Activated naive CD4-positive, alpha-beta T cell treated with anti-CD3 and anti-CD28 coated beads for 36 hours (primary cell): ENCODE measurements at regions of chr10 and their contacts with region 1.

Region 1: GRCh38 chr10:11713186-11713743 is 28.9 kb upstream of the ECHDC3 start:
- DNase-seq: no peak
- H3K4me3 Mint-ChIP-seq: no peak overlapping the region
- H3K27ac Mint-ChIP-seq: no peak overlapping the region
- H3K4me1 Mint-ChIP-seq: peaks cover 17% of the 10 kb centered on the region
- H3K27me3 Mint-ChIP-seq: peaks cover 32% of the 10 kb centered on the region

Region 2: DNA sequence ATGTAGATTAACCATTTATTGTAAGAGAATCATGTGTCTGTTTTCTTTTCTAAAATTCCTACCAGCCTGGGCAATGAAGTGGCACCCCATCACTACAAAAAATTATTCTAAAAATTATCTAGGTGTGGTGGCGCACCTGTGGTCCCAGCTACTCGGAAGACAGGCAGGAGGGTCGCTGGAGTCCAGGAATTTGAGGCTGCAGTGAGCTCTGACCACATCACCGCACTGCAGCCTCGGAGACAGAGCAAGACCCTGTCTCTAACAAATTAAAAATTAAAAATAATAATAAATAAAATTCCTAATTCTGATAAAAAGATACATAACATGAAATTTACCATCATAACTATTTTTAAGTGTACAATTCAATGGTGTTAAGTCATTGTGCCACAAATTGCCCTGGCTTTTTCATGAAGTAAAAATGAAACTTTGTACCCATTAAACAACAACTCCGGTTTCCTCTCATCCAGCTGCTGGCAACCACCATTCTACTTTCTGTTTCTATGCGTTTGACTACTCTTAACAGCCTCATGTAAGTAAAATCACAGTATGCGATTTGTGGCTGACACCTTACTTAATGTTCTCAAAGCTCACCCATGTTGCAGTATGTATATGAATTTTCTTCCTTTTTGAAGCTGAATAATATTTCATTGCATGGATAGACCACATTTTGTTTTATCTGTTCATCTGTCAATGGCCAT is 81.2 kb before region 1 on chr10:
- CTCF ChIA-PET with region 1: no interaction called
- intact Hi-C with region 1: loop called (anchors 1 kb)
- DNase-seq: peak; percentile 76
- H3K4me3 Mint-ChIP-seq: no peak overlapping the region
- H3K27ac Mint-ChIP-seq: no peak overlapping the region
- H3K4me1 Mint-ChIP-seq: peaks cover 13% of the 10 kb centered on the region
- H3K27me3 Mint-ChIP-seq: no peaks in the 10 kb centered on the region

Region 3: DNA sequence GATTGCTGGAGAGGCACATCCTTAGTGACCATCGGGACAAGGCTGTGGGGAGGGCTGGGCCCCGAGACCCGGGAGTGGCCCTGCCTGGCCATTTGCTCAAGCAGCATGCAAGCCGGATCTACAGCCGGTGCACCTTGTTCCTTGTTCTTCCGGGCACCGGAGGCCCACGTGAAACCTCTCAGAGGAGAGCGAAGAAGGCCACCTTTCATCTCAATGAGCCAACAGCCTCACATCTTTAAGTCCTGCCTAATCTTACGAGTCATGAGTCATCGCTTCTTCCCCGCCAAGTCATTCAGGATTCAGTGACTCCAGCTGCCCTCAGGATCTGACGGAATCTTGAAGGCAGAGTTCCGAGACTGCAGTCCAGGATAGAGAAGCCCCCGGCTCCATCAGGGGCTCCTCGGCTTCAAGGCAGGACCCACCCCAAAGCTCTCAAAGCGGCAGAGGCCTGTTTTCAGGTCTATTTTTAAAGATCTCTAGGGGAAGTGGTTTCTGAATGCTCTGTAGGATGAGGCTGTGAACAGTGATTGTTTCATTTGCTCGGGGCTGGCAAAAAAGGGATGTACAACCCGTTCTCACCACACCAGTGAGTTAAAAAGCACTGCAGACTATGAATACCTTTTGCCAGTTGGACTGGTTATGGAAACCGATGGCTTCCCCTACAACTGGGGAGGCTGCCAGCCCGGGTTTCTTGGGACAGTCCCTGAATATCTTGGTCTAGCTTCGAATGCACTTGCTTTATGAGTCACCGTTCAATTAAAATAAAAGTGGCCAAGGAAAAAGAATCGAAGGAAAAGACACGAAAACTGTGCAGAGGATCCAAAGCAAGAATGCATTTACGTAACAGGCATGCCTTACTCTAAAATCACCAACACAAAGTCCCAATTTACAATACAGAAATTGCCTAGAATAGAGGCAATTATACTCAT is 28.3 kb before region 1 on chr10:
- CTCF ChIA-PET with region 1: interaction called, 4 read pairs
- intact Hi-C with region 1: loop called (anchors 1 kb)
- DNase-seq: peak; percentile 86
- H3K4me3 Mint-ChIP-seq: peak overlapping the region; percentile 75
- H3K27ac Mint-ChIP-seq: peak overlapping the region; percentile 95
- H3K4me1 Mint-ChIP-seq: peaks cover 36% of the 10 kb centered on the region
- H3K27me3 Mint-ChIP-seq: peaks cover 1% of the 10 kb centered on the region

Region 4: DNA sequence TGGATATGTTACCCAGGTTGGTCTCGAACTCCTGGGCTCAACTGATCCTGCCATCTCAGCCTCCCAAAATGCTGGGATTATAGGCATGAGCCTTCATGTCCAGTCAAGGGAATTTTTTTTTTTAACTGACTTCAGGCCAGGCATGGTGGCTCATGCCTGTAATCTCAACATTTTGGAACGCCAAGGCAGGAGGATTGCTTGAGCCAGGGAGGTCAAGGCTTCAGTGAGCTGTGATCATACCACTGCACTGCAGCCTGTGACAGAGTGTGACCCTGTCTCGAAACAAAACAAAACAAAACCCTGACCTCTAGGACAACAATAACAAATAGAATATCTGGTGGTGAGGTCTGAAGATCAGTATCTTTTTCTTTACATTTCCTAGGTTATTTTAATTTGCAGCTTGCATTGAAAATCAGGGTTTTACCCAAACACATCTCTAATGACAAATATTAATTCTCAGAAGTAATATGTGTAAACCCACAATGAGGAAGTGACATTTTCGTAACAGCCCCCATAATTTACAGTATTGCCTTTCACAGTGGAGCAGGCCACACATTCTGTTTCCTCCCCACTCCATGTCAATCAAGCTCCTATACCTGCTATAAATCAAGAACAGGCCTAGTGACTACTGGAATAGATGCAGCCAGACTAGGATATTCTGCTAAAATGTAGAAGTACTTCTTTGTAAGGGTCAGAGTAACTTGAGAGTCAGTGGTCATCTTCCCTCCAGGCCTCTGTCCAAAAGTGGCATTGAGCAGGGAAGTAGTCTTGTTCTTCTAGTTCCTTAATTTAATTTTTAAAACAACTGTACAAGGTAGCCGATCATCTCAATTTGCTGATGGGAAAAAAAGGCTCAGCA is 14.3 kb before region 1 on chr10:
- CTCF ChIA-PET with region 1: interaction called, 5 read pairs
- intact Hi-C with region 1: loop called (anchors 1 kb)
- DNase-seq: no peak
- H3K4me3 Mint-ChIP-seq: no peak overlapping the region
- H3K27ac Mint-ChIP-seq: no peak overlapping the region
- H3K4me1 Mint-ChIP-seq: peaks cover 4% of the 10 kb centered on the region
- H3K27me3 Mint-ChIP-seq: no peaks in the 10 kb centered on the region